A673 (cell line): ENCODE measurements at regions of chr5 and their contacts with region 1.

Region 1: DNA sequence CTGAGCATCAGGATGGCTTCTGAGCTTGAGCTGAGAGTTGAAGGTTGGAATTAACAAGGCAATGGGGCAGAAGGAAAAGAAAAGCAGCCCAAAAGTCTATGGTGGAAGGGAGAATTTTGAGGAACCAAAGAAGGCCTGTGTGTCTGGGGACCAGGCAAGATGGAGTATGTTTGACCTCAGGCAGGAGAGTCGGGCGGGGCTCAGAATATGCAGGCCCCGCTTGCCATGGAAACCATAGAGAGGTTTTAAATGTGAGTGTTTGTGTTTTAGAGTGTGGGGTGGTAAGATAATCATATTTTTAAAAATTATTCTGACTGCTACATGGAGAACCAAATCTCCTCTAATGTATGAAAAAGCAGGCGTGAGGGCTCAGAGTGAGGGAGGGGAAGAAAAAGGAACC is 174.0 kb upstream of the PPP2R2B start:
- DNase-seq: no peak
- H3K4me3 ChIP-seq: no peak overlapping the region
- H3K27ac ChIP-seq: no peak overlapping the region
- H3K4me1 ChIP-seq: no peaks in the 10 kb centered on the region
- H3K27me3 ChIP-seq: peaks cover 65% of the 10 kb centered on the region
- CTCF ChIP-seq: no peak

Region 2: DNA sequence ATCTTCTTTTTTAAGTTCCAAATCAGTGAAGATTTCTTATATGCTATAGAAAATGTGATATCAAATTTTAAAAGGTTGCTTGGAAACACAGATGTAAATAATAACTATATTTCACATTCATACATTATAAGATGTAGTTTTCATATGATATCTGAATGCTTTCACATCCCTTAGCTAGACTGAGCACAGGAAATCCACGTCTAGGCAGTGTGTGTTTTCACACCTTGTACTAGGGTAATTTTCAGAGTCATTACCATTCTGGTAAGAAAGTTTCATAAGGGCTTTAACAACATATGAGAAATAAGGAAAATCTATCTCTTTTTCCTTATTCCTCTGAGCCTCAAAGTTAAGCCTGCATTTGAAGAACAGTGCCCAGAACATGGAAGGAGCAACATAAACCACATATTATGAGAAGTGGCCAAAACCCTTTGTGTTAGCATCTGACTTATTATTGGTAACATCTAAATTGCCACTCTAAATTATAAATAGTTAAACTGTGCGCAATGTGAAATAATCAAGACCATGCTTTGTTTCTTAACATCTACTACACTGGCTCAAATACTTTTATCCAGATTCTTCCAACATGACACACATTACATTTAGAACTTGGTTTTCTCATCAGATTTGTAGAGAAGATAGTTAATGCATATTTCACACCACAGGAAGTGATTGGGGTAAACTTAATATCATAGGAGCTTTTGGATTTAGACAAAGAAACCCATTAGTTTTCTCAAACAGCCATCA is 287.3 kb before region 1 on chr5:
- CTCF ChIA-PET with region 1: no interaction called
- POLR2A ChIA-PET with region 1: no interaction called
- intact Hi-C with region 1: no loop called
- DNase-seq: no peak
- H3K4me3 ChIP-seq: no peak overlapping the region
- H3K27ac ChIP-seq: no peak overlapping the region
- H3K4me1 ChIP-seq: no peaks in the 10 kb centered on the region
- H3K27me3 ChIP-seq: peaks cover 10% of the 10 kb centered on the region
- CTCF ChIP-seq: no peak

Region 3: GRCh38 chr5:146902471-146902870 is 150.0 kb before region 1 on chr5:
- CTCF ChIA-PET with region 1: no interaction called
- POLR2A ChIA-PET with region 1: interaction called, 22 read pairs
- intact Hi-C with region 1: no loop called
- DNase-seq: no peak
- H3K4me3 ChIP-seq: no peak overlapping the region
- H3K27ac ChIP-seq: no peak overlapping the region
- H3K4me1 ChIP-seq: no peaks in the 10 kb centered on the region
- H3K27me3 ChIP-seq: peaks cover 15% of the 10 kb centered on the region
- CTCF ChIP-seq: no peak

Region 4: GRCh38 chr5:147037515-147038205 is 14.9 kb before region 1 on chr5:
- CTCF ChIA-PET with region 1: no interaction called
- POLR2A ChIA-PET with region 1: no interaction called
- intact Hi-C with region 1: no loop called
- DNase-seq: peak; percentile 61
- H3K4me3 ChIP-seq: no peak overlapping the region
- H3K27ac ChIP-seq: no peak overlapping the region
- H3K4me1 ChIP-seq: peaks cover 4% of the 10 kb centered on the region
- H3K27me3 ChIP-seq: peaks cover 5% of the 10 kb centered on the region
- CTCF ChIP-seq: no peak

Region 5: DNA sequence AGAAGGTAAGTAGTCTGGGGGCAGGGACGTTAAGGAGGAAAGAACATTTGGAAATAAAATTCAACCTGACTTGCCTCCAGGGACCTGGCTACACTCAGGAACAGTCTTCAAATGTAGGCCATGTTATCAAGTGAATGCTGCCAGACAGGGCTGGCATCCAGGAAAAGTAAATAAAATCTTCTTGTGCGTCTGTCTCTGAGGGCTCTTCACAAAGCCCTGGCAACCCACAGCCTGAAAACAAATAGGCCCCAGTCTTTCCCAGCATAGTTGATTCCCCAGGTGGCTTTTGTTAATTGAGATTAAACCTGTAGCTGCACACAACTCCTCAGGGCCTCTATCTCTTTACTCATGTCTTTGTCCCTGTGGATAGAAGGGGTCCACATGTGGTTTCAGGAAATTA is 237.7 kb after region 1 on chr5:
- CTCF ChIA-PET with region 1: no interaction called
- POLR2A ChIA-PET with region 1: no interaction called
- intact Hi-C with region 1: no loop called
- DNase-seq: no peak
- H3K4me3 ChIP-seq: no peak overlapping the region
- H3K27ac ChIP-seq: no peak overlapping the region
- H3K4me1 ChIP-seq: no peaks in the 10 kb centered on the region
- H3K27me3 ChIP-seq: peaks cover 18% of the 10 kb centered on the region
- CTCF ChIP-seq: no peak